Breast epithelium (tissue), 4 donors: ENCODE measurements at regions of chr5 and their contacts with region 1.

Region 1: DNA sequence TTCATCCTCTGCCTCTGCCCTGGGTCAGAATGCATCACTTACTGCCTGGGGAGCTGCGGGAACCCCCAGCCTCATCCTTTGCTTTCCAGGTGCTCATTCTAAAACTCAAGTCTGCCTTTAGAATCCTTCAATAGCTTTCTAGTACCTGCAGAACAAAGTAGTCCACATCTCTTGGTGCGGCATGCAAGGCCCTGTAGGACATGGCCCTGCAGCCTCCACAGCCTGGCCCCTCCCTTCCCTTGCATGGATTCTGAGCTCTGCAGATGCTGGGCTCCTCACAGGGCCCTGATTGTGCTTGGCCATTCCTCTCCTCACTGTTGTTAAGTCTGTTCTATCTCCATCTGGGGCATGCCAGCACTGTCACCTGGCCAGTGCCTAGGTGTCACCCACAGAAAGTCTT is 141.6 kb downstream of the ADCY2 start:
- DNase-seq: no peak
- H3K4me3 ChIP-seq: no peak overlapping the region
- H3K27ac ChIP-seq: no peak overlapping the region
- H3K4me1 ChIP-seq: no peaks in the 10 kb centered on the region
- H3K27me3 ChIP-seq: no peaks in the 10 kb centered on the region
- CTCF ChIP-seq: no peak
- POLR2A ChIP-seq: no peak

Region 2: DNA sequence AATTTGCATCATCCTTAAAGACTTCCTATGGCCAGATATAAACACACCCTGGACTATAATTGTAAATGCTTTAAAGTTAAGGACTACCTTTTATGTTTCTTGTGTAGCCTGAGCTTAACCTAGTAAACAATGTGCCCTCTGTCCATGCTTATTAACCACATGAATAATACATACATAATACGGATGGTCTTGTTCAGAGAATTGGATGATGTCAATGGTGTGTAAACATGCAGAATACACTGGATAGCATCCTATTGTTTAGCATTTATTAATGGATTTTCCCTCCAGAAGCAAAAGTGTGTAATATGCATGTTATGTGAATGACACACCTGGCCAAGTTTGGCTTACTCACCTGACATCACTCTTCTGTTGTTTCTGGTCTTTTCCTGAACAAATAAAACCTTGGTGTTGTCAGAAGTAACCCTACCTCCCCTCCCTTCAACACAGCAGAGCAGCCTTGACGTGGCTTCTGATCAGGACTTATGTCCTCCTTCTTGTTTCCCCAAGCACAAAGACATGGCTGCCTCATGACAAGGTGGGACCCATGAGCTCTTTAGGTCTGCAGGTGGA is 849.2 kb after region 1 on chr5:
- intact Hi-C with region 1: loop called (anchors 5 kb)
- DNase-seq: no peak
- H3K4me3 ChIP-seq: no peak overlapping the region
- H3K27ac ChIP-seq: no peak overlapping the region
- H3K4me1 ChIP-seq: no peaks in the 10 kb centered on the region
- H3K27me3 ChIP-seq: no peaks in the 10 kb centered on the region
- CTCF ChIP-seq: no peak
- POLR2A ChIP-seq: no peak